OCI-LY7 (cell line): ENCODE measurements at regions of chr6 and their contacts with region 1.

Region 1: DNA sequence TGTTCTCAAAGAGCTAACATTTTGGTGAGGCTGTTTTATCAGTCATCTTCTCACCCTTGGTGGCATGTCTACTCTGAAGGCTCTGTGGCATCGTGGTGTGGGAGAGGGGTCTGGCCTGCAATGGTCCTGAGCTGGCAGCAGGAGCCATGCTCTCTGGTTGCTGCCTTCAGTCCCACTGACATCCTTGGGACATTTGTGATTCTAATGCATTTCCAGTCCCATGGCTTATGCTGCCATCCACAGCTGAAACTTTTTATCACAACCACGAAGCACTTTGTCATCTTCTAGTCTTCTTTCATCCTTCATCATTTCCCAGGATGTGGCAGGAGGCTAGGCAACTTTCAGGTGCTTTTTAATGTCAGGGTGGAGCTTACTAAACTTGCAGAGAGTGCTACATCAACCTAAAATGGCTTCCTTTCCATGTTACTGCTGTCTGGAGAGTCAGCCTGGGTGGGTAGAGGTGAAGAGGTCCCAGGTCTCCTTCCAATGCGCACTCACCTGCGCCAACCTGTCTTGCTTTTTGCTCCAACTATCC is 77.1 kb downstream of the GPR63 start:
- DNase-seq: peak; percentile 4
- H3K4me3 ChIP-seq: no peak overlapping the region
- H3K27ac ChIP-seq: no peak overlapping the region
- H3K4me1 ChIP-seq: no peaks in the 10 kb centered on the region
- CTCF ChIP-seq: peak; percentile 44; the same call in 1 of the 2 replicates

Region 2: DNA sequence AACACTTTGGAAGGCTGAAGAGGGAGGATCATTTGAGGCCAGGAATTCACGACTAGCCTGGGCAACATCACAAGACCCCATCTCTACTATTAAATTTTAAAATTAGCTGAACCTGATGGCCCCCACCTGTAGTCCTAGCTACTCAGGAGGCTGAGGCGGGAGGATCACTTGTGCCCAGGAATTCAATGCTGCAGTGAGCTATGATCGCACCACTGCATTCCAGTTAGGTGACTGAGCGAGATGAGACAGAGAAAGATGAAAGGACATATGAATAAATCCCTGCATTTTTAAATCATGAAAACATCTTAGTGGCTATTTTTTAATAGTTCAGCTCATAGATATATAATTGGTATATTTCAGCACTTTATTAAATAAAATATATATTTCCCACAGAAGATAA is 16.7 kb before region 1 on chr6:
- CTCF ChIA-PET with region 1: no interaction called
- POLR2A ChIA-PET with region 1: interaction called, 11 read pairs
- intact Hi-C with region 1: no loop called
- DNase-seq: no peak
- H3K4me3 ChIP-seq: no peak overlapping the region
- H3K27ac ChIP-seq: no peak overlapping the region
- H3K4me1 ChIP-seq: no peaks in the 10 kb centered on the region
- CTCF ChIP-seq: no peak

Region 3: DNA sequence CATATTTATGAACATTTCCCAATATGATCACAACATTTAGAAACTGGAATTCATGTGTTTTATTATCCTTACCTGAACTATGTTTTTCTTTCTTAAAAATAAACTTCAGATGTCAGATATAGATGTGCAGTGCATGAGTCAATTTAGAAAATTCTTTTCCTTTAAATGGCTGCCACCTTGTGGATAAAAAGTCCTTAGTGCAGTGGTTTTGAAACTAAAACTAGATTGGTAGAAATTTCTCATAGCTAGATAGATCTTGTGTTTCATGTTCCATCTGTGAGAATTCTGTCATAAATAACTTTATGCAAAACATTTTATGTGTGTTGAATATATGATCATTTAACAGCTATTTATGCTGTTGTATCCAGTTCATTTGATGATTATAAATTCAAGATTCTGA is 299.3 kb after region 1 on chr6:
- CTCF ChIA-PET with region 1: no interaction called
- POLR2A ChIA-PET with region 1: interaction called, 3 read pairs
- intact Hi-C with region 1: loop called (anchors 1 kb)
- DNase-seq: peak; percentile 62
- H3K4me3 ChIP-seq: no peak overlapping the region
- H3K27ac ChIP-seq: no peak overlapping the region
- H3K4me1 ChIP-seq: no peaks in the 10 kb centered on the region
- CTCF ChIP-seq: peak; percentile 91